WTC11 (cell line): ENCODE measurements at regions of chr9 and their contacts with region 1.

Region 1: GRCh38 chr9:128829477-128830251 is at the start of gene SPOUT1:
- DNase-seq: peak; percentile 96
- ATAC-seq: peak; percentile 97
- H3K4me3 Mint-ChIP-seq: peak within 1 kb of the TSS; percentile 93
- H3K27ac Mint-ChIP-seq: peak within 1 kb of the TSS; percentile 89
- H3K4me1 Mint-ChIP-seq: peaks cover 8% of the 10 kb centered on the region
- H3K27me3 Mint-ChIP-seq: no peaks in the 10 kb centered on the region
- CTCF ChIP-seq: no peak
- total RNA-seq, gene SPOUT1: 76.8 to 79.3 TPM (median 77.5 TPM) in 3 replicates

Region 2: GRCh38 chr9:128764361-128764760 is 65.3 kb before region 1 on chr9:
- CTCF ChIA-PET with region 1: interaction called, 10 read pairs
- POLR2A ChIA-PET with region 1: no interaction called
- DNase-seq: peak; percentile 50
- ATAC-seq: peak; percentile 87
- H3K4me3 Mint-ChIP-seq: no peak overlapping the region
- H3K27ac Mint-ChIP-seq: peak overlapping the region; percentile 90
- H3K4me1 Mint-ChIP-seq: peaks cover 10% of the 10 kb centered on the region
- H3K27me3 Mint-ChIP-seq: no peaks in the 10 kb centered on the region
- CTCF ChIP-seq: no peak

Region 3: GRCh38 chr9:128818099-128818838 is 11.4 kb before region 1 on chr9 and contains the start of gene ENDOG:
- CTCF ChIA-PET with region 1: interaction called, 40 read pairs
- POLR2A ChIA-PET with region 1: interaction called, 26 read pairs
- DNase-seq: peak; percentile 99
- ATAC-seq: peak; percentile 86
- H3K4me3 Mint-ChIP-seq: peak within 1 kb of the TSS; percentile 71
- H3K27ac Mint-ChIP-seq: peak within 1 kb of the TSS; percentile 80; the same call in 1 of the 2 replicates
- H3K4me1 Mint-ChIP-seq: peaks cover 3% of the 10 kb centered on the region
- H3K27me3 Mint-ChIP-seq: no peaks in the 10 kb centered on the region
- CTCF ChIP-seq: peak; percentile 53; the same call in 1 of the 2 replicates
- total RNA-seq, gene ENDOG: 25.8 to 28.7 TPM (median 25.8 TPM) in 3 replicates